Heart left ventricle (tissue), 16 donors: ENCODE measurements at regions of chr12 and their contacts with region 1.

Region 1: GRCh38 chr12:46131729-46132469 is 136.9 kb downstream of the SLC38A1 start:
- DNase-seq: no peak
- ATAC-seq: peak in 3 of 4 donors; percentile 42 to 66 (median 43)
- H3K4me3 ChIP-seq: no peak overlapping the region
- H3K27ac ChIP-seq: no peak overlapping the region
- H3K4me1 ChIP-seq: peaks cover 0 to 6% (median 0%) of the 10 kb centered on the region in 12 donors
- H3K27me3 ChIP-seq: peaks cover 0 to 3% (median 0%) of the 10 kb centered on the region in 9 donors
- CTCF ChIP-seq: peak in 4 of 12 donors; percentile 6 to 24 (median 14)
- POLR2A ChIP-seq: no peak

Region 2: GRCh38 chr12:46224386-46224785 is 92.5 kb after region 1 on chr12:
- intact Hi-C with region 1: no loop called
- DNase-seq: peak in 3 of 5 donors; percentile 24 to 54 (median 52)
- ATAC-seq: peak in 3 of 4 donors; percentile 68 to 94 (median 90)
- H3K4me3 ChIP-seq: no peak overlapping the region
- H3K27ac ChIP-seq: peak overlapping the region in 2 of 12 donors; percentile 26 to 66
- H3K4me1 ChIP-seq: peaks cover 0 to 63% (median 24%) of the 10 kb centered on the region in 12 donors
- H3K27me3 ChIP-seq: no peaks in the 10 kb centered on the region
- CTCF ChIP-seq: no peak
- POLR2A ChIP-seq: no peak

Region 3: GRCh38 chr12:47014474-47014873 is 882.6 kb after region 1 on chr12:
- intact Hi-C with region 1: loop called in 1 of 10 experiments (anchors 10 kb)
- DNase-seq: no peak
- ATAC-seq: no peak
- H3K4me3 ChIP-seq: no peak overlapping the region
- H3K27ac ChIP-seq: no peak overlapping the region
- H3K4me1 ChIP-seq: no peaks in the 10 kb centered on the region
- H3K27me3 ChIP-seq: peaks cover 0 to 10% (median 0%) of the 10 kb centered on the region in 9 donors
- CTCF ChIP-seq: no peak
- POLR2A ChIP-seq: no peak